CD14-positive monocyte (primary cell): ENCODE measurements at regions of chr9 and their contacts with region 1.

Region 1: GRCh38 chr9:128845155-128845931 is 15.7 kb upstream of the SPOUT1 start:
- DNase-seq: no peak
- H3K4me3 ChIP-seq: no peak overlapping the region
- H3K4me3 Mint-ChIP-seq: no peak overlapping the region
- H3K27ac ChIP-seq: no peak overlapping the region
- H3K27ac Mint-ChIP-seq: no peak overlapping the region
- H3K4me1 ChIP-seq: no peaks in the 10 kb centered on the region
- H3K4me1 Mint-ChIP-seq: no peaks in the 10 kb centered on the region
- H3K27me3 ChIP-seq: no peaks in the 10 kb centered on the region
- H3K27me3 Mint-ChIP-seq: no peaks in the 10 kb centered on the region
- CTCF ChIP-seq: no peak

Region 2: DNA sequence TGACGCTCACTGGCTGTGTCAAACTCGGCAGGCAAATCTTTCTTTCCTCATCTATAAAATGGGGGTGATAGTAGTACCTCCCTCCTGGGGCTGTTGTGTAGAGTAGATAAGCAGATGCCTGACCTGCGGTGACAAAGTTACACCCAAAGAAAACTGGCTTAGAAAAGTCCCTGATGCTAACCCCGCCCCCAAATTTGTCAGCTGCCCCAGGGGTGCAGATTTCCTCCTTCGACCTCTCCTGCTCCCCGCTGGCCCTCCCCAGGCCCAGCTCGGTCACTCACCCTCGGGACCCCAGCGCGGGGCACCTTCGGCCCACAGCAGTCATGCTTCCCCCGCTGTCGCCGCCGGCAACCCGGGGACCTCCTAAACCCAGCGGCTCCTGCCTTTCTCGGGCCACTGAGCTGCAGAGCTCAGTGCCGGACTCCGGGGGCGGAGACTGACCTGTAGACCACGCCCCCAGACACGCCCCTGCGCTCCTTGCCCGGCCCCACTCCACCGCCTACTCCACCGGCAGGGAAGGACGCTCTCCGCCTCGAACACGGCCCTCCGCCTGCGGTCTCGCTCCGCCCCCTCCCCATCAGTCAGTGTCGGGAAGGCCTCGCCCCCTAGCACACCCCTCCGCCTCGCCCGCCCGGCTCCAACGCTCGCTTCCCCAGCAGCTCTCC is 1074.3 kb before region 1 on chr9:
- intact Hi-C with region 1: no loop called
- DNase-seq: peak; percentile 94 to 98 (median 98)
- H3K4me3 ChIP-seq: peak overlapping the region; percentile 29 to 80 (median 60)
- H3K4me3 Mint-ChIP-seq: peak overlapping the region; percentile 88 to 91
- H3K27ac ChIP-seq: peak overlapping the region; percentile 51 to 80
- H3K27ac Mint-ChIP-seq: peak overlapping the region; percentile 86 to 94 (median 89)
- H3K4me1 ChIP-seq: peaks cover 68 to 91% of the 10 kb centered on the region in 2 donors
- H3K4me1 Mint-ChIP-seq: peaks cover 83% of the 10 kb centered on the region
- H3K27me3 ChIP-seq: no peaks in the 10 kb centered on the region
- H3K27me3 Mint-ChIP-seq: peaks cover 0 to 3% (median 0%) of the 10 kb centered on the region in 3 donors
- CTCF ChIP-seq: no peak

Region 3: GRCh38 chr9:128933731-128934130 is 88.4 kb after region 1 on chr9:
- intact Hi-C with region 1: loop called in 1 of 2 experiments (anchors 5 kb)
- DNase-seq: no peak
- H3K4me3 ChIP-seq: no peak overlapping the region
- H3K4me3 Mint-ChIP-seq: no peak overlapping the region
- H3K27ac ChIP-seq: no peak overlapping the region
- H3K27ac Mint-ChIP-seq: peak overlapping the region in 1 of 7 donors; percentile 42
- H3K4me1 ChIP-seq: no peaks in the 10 kb centered on the region
- H3K4me1 Mint-ChIP-seq: no peaks in the 10 kb centered on the region
- H3K27me3 ChIP-seq: no peaks in the 10 kb centered on the region
- H3K27me3 Mint-ChIP-seq: peaks cover 0 to under 1% (median 0%) of the 10 kb centered on the region in 3 donors
- CTCF ChIP-seq: no peak